ENCODE measurements at regions of chr12 and their contacts with region 1.

Region 1: DNA sequence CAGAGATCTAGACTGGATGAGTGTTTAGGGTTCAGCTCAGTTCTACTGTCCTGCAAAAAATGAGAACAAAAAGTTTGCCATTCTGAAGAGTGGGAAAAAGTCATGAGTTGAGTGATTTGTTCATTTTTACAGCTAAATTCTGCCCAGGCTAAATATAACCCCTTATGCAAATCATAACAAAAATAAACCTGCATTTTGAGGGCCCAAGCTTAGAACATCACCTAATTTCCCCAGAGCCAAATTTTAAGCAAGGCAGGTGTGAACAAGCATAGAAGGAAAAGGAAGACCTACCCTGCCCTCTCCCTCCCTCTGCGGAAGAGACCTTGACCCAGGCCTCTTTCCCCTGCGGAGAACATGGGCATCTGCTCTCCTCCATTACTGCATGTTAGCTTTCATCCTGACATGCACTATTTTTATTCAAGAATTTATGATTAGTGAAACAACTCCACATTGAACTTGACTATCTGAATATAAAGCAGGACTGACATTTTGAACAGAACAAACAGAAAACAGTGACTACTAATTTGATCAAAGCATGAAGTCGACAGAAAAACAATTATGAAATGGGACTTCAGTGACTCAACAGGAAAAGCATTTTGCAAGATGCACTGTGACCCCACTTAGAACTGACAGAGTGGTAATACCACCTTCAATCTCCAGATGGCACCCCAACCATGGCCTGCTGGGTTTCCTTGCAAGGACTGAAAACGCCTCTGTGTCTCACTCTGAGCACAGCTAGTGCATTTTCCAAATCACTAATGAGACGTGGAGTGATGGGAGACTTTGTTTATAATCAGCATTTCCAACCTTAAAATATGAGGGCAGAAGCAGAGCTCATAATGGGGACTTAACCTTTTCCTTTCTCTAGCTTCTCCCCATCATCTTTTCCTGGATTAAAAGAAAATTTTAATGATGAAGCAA is 30.9 kb upstream of the SELPLG start:
- DNase-seq: peak; percentile 88
- H3K4me3 Mint-ChIP-seq: no peak overlapping the region
- H3K27ac Mint-ChIP-seq: peak overlapping the region; percentile 64
- H3K4me1 Mint-ChIP-seq: peaks cover 16% of the 10 kb centered on the region
- H3K27me3 Mint-ChIP-seq: no peaks in the 10 kb centered on the region

Region 2: DNA sequence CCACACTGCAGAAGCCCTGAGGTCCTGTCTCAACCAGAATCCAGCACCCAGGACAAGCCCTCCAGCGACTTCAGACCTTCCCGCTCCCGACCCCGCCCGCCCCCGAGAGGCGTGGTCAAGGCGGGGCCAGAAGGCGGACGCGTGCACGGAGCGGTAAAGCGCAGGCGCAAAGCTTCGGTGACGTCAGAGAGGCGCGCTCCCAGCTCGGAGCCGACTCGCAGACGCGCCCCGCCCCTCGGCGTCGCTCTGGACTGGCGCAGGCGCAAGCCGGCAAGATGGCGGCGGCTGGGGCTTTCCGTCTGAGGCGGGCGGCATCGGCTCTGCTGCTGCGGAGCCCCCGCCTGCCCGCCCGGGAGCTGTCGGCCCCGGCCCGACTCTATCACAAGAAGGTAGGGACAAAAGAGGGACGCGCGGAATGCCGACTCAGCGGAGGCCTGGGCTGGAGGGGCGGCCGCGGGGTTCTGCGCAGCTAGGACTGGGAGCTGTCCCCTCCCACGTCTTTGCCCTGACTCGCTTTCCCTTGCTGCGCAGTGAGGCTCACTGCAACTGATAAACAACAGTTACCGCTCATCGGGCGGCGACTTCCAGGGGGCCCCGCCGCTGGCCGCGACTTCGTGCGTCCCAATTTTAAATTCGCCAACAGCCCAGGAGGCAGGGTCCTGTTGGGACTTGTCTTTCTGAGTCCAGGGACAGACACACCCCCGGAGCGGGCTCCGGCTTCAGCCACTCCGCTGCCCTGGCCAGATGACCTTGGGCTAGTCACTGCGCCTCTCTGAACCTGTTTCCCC is 102.1 kb before region 1 on chr12 and contains the start of gene ISCU:
- CTCF ChIA-PET with region 1: interaction called, 31 read pairs
- POLR2A ChIA-PET with region 1: interaction called, 8 read pairs
- DNase-seq: peak; percentile 99
- H3K4me3 Mint-ChIP-seq: peak within 1 kb of the TSS; percentile 100
- H3K27ac Mint-ChIP-seq: peak within 1 kb of the TSS; percentile 99
- H3K4me1 Mint-ChIP-seq: peaks cover 63% of the 10 kb centered on the region
- H3K27me3 Mint-ChIP-seq: no peaks in the 10 kb centered on the region
- total RNA-seq, gene ISCU: 69.9 to 74.1 TPM

Region 3: DNA sequence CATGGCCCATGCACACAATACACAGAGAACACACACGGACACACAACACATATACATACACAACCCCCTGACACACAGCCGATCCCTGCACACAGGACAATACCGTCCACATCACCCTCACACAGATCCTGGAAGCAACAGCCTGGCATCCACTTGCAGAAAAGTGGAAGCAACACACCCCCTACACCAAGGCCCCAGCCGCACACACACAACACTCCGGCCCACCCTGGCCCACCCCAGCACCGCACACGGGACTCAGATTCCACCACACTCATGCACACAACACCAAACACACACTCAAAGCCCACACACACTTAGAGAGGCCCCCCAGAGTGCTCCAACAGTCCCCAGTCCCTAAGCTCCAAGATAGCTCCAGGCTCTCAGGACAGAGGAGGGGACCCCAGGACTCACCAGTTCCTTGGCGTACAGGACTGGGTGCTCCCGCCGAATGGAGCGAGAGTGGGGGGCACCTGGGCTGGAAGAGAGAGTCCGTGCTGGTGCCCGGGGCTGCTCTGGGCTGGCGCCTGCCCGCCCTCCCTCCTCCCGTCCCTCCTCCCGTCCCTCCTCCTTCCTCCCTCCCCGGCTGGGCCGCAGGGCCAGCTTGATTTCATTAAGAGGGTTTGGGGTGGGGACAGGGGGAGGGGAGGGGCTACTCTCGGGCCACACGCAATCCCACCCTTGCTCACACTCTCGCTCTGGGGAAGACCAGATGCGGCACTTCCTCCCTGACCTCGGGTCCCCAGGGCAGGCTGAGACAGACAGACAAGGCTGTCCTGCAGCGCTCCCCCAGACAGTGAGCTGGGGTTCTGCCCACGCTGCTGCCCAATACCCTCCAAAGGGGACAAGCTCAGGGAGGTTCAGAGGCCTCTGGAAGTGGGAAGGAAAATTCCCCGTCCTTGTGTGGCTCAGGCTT is 66.8 kb before region 1 on chr12 and contains the start of gene TMEM119:
- CTCF ChIA-PET with region 1: no interaction called
- POLR2A ChIA-PET with region 1: no interaction called
- DNase-seq: no peak
- H3K4me3 Mint-ChIP-seq: no peak within 1 kb of the TSS
- H3K27ac Mint-ChIP-seq: no peak within 1 kb of the TSS
- H3K4me1 Mint-ChIP-seq: no peaks in the 10 kb centered on the region
- H3K27me3 Mint-ChIP-seq: no peaks in the 10 kb centered on the region
- total RNA-seq, gene TMEM119: 0.80 to 1.0 TPM

Region 4: GRCh38 chr12:108633534-108634248 is 30.9 kb before region 1 on chr12 and contains the start of gene SELPLG:
- CTCF ChIA-PET with region 1: interaction called, 45 read pairs
- POLR2A ChIA-PET with region 1: interaction called, 57 read pairs
- DNase-seq: peak; percentile 93
- H3K4me3 Mint-ChIP-seq: peak within 1 kb of the TSS; percentile 99
- H3K27ac Mint-ChIP-seq: peak within 1 kb of the TSS; percentile 100
- H3K4me1 Mint-ChIP-seq: peaks cover 55% of the 10 kb centered on the region
- H3K27me3 Mint-ChIP-seq: no peaks in the 10 kb centered on the region
- total RNA-seq, gene SELPLG: 289 to 301 TPM

Region 5: GRCh38 chr12:108649669-108650068 is 14.9 kb before region 1 on chr12:
- CTCF ChIA-PET with region 1: interaction called, 19 read pairs
- POLR2A ChIA-PET with region 1: interaction called, 5 read pairs
- DNase-seq: no peak
- H3K4me3 Mint-ChIP-seq: no peak overlapping the region
- H3K27ac Mint-ChIP-seq: no peak overlapping the region
- H3K4me1 Mint-ChIP-seq: peaks cover 34% of the 10 kb centered on the region
- H3K27me3 Mint-ChIP-seq: no peaks in the 10 kb centered on the region

Region 6: GRCh38 chr12:108691175-108691997 is 26.8 kb after region 1 on chr12:
- CTCF ChIA-PET with region 1: interaction called, 21 read pairs
- POLR2A ChIA-PET with region 1: interaction called, 3 read pairs
- DNase-seq: peak; percentile 83
- H3K4me3 Mint-ChIP-seq: peak overlapping the region; percentile 66
- H3K27ac Mint-ChIP-seq: peak overlapping the region; percentile 89
- H3K4me1 Mint-ChIP-seq: peaks cover 66% of the 10 kb centered on the region
- H3K27me3 Mint-ChIP-seq: no peaks in the 10 kb centered on the region

Region 7: GRCh38 chr12:108722992-108723766 is 58.6 kb after region 1 on chr12:
- CTCF ChIA-PET with region 1: no interaction called
- POLR2A ChIA-PET with region 1: no interaction called
- DNase-seq: no peak
- H3K4me3 Mint-ChIP-seq: no peak overlapping the region
- H3K27ac Mint-ChIP-seq: no peak overlapping the region
- H3K4me1 Mint-ChIP-seq: peaks cover 26% of the 10 kb centered on the region
- H3K27me3 Mint-ChIP-seq: peaks cover 8% of the 10 kb centered on the region

Region 8: GRCh38 chr12:108803428-108804105 is 139.0 kb after region 1 on chr12:
- CTCF ChIA-PET with region 1: interaction called, 167 read pairs
- POLR2A ChIA-PET with region 1: interaction called, 23 read pairs
- DNase-seq: peak; percentile 70
- H3K4me3 Mint-ChIP-seq: no peak overlapping the region
- H3K27ac Mint-ChIP-seq: peak overlapping the region; percentile 41
- H3K4me1 Mint-ChIP-seq: peaks cover 10% of the 10 kb centered on the region
- H3K27me3 Mint-ChIP-seq: no peaks in the 10 kb centered on the region

Region 9: GRCh38 chr12:108826807-108827721 is 162.5 kb after region 1 on chr12:
- CTCF ChIA-PET with region 1: no interaction called
- POLR2A ChIA-PET with region 1: no interaction called
- DNase-seq: no peak
- H3K4me3 Mint-ChIP-seq: no peak overlapping the region
- H3K27ac Mint-ChIP-seq: peak overlapping the region; percentile 64
- H3K4me1 Mint-ChIP-seq: peaks cover 88% of the 10 kb centered on the region
- H3K27me3 Mint-ChIP-seq: no peaks in the 10 kb centered on the region

Region 10: DNA sequence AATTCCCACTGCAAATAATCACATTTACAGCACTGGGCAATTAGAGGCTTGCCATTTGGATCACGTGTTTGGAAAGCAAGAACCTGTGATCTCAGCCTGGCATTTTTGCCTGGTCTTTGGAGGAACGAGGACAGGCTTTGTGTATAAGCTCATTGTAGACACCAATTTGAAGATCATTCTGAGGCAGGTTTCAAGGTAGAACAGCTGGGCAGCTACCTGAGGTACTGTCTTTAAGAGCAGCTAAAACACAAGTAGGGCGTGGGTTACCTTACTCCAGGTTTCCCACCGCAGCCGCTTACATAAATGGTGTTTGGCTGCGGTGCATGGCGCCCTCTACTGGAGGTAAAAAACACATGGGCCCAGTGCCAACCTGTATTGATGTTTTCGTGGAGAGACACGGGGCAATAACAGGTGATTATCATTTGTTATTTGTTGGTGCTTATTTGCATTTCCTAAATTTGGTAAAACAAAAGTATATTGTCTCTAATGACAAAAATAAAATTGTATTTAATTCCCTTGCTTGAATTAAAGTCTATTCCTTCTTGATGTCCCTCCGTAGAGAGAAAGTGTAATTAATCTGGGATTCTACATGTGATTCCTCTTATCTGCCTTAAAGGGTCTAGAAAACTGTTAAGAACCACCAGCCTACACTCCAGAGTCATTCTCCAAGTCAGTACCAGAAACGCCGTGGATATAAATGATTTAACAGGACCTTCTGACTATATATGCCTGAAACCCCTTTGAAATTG is 286.6 kb after region 1 on chr12:
- CTCF ChIA-PET with region 1: interaction called, 32 read pairs
- POLR2A ChIA-PET with region 1: no interaction called
- DNase-seq: peak; percentile 78
- H3K4me3 Mint-ChIP-seq: no peak overlapping the region
- H3K27ac Mint-ChIP-seq: no peak overlapping the region
- H3K4me1 Mint-ChIP-seq: peaks cover 7% of the 10 kb centered on the region
- H3K27me3 Mint-ChIP-seq: peaks cover 21% of the 10 kb centered on the region